ENCODE measurements at regions of chrX and their contacts with region 1.

Region 1: GRCh38 chrX:102652031-102652688 is 877 bp downstream of the GPRASP1 start:
- DNase-seq: peak; percentile 68 to 81 (median 71)
- H3K4me3 ChIP-seq: peak overlapping the region; percentile 79
- H3K27ac ChIP-seq: peak overlapping the region; percentile 85 to 95
- H3K4me1 ChIP-seq: peaks cover 2% of the 10 kb centered on the region
- H3K27me3 ChIP-seq: no peaks in the 10 kb centered on the region
- CTCF ChIP-seq: peak; percentile 13 to 79 (median 70)
- EP300 ChIP-seq: no peak
- POLR2A ChIP-seq: peak; percentile 23

Region 2: GRCh38 chrX:102624105-102624504 is 28.1 kb before region 1 on chrX:
- intact Hi-C with region 1: no loop called
- DNase-seq: no peak
- H3K4me3 ChIP-seq: no peak overlapping the region
- H3K27ac ChIP-seq: no peak overlapping the region
- H3K4me1 ChIP-seq: no peaks in the 10 kb centered on the region
- H3K27me3 ChIP-seq: no peaks in the 10 kb centered on the region
- CTCF ChIP-seq: no peak
- EP300 ChIP-seq: no peak
- POLR2A ChIP-seq: no peak

Region 3: GRCh38 chrX:102684772-102685515 is 32.8 kb after region 1 on chrX:
- intact Hi-C with region 1: no loop called
- DNase-seq: no peak
- H3K4me3 ChIP-seq: no peak overlapping the region
- H3K27ac ChIP-seq: no peak overlapping the region
- H3K4me1 ChIP-seq: no peaks in the 10 kb centered on the region
- H3K27me3 ChIP-seq: no peaks in the 10 kb centered on the region
- CTCF ChIP-seq: no peak
- EP300 ChIP-seq: no peak
- POLR2A ChIP-seq: no peak

Region 4: GRCh38 chrX:102712952-102713625 is 60.9 kb after region 1 on chrX:
- intact Hi-C with region 1: loop called in 1 of 4 experiments (anchors 5 kb)
- DNase-seq: peak; percentile 70 to 82 (median 78)
- H3K4me3 ChIP-seq: peak overlapping the region; percentile 85
- H3K27ac ChIP-seq: peak overlapping the region; percentile 93 to 96
- H3K4me1 ChIP-seq: peaks cover 2% of the 10 kb centered on the region
- H3K27me3 ChIP-seq: no peaks in the 10 kb centered on the region
- CTCF ChIP-seq: peak; percentile 36 to 81 (median 65)
- EP300 ChIP-seq: no peak
- POLR2A ChIP-seq: peak; percentile 60